A673 (cell line): ENCODE measurements at regions of chr7 and their contacts with region 1.

Region 1: GRCh38 chr7:111730476-111731300 is 168.4 kb upstream of the IMMP2L start:
- DNase-seq: peak; percentile 61
- H3K4me3 ChIP-seq: no peak overlapping the region
- H3K27ac ChIP-seq: no peak overlapping the region
- H3K4me1 ChIP-seq: no peaks in the 10 kb centered on the region
- H3K27me3 ChIP-seq: no peaks in the 10 kb centered on the region
- CTCF ChIP-seq: peak; percentile 73

Region 2: DNA sequence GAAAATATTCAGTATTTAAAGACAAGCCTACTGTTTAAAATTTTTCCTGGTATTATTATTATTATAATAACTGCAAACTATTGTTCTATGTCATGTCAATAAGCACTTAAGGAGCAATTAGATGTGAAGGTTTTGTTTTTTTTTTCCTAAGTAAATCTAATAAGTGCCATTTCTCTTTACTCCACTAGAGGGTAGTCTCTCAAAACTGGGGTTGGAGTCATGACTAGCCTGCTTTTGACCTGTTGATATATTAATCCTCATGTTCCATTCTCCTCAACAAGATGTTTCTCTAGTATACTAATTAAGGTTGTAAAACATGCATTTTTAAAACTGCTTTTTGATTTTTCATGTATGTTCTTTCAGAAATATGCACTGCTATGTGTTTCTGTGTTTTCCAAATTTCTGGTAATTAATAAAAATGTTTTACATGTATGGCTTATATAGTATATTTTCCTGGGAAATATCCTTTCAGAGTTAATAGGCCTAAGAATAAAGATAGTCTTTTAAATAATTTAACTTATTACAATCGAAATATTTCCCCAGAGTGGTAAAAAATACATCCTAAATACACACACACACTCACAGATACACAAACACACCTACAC is 640.8 kb before region 1 on chr7:
- CTCF ChIA-PET with region 1: no interaction called
- POLR2A ChIA-PET with region 1: no interaction called
- intact Hi-C with region 1: loop called (anchors 5 kb)
- DNase-seq: peak; percentile 58
- H3K4me3 ChIP-seq: no peak overlapping the region
- H3K27ac ChIP-seq: no peak overlapping the region
- H3K4me1 ChIP-seq: peaks cover 20% of the 10 kb centered on the region
- H3K27me3 ChIP-seq: no peaks in the 10 kb centered on the region
- CTCF ChIP-seq: peak; percentile 76

Region 3: GRCh38 chr7:111329367-111330234 is 401.1 kb before region 1 on chr7:
- CTCF ChIA-PET with region 1: no interaction called
- POLR2A ChIA-PET with region 1: no interaction called
- intact Hi-C with region 1: loop called (anchors 5 kb)
- DNase-seq: peak; percentile 6
- H3K4me3 ChIP-seq: no peak overlapping the region
- H3K27ac ChIP-seq: no peak overlapping the region
- H3K4me1 ChIP-seq: no peaks in the 10 kb centered on the region
- H3K27me3 ChIP-seq: no peaks in the 10 kb centered on the region
- CTCF ChIP-seq: peak; percentile 33; the same call in 1 of the 2 replicates